ENCODE measurements at regions of chr10 and their contacts with region 1.

Region 1: GRCh38 chr10:14200698-14201544 is 129.8 kb downstream of the FRMD4A start:
- DNase-seq: no peak
- CTCF ChIP-seq: no peak

Region 2: GRCh38 chr10:14822879-14823755 is 622.2 kb after region 1 on chr10:
- in situ Hi-C with region 1: loop called (anchors 25 kb)
- DNase-seq: peak; percentile 66
- CTCF ChIP-seq: peak; percentile 33